Adrenal gland (tissue), 19 donors: ENCODE measurements at regions of chr3 and their contacts with region 1.

Region 1: GRCh38 chr3:69161587-69162307 is 39.4 kb upstream of the LMOD3 start:
- DNase-seq: peak in 6 of 7 donors; percentile 22 to 67 (median 32)
- H3K4me3 ChIP-seq: no peak overlapping the region
- H3K27ac ChIP-seq: no peak overlapping the region
- H3K4me1 ChIP-seq: no peaks in the 10 kb centered on the region
- H3K27me3 ChIP-seq: no peaks in the 10 kb centered on the region
- CTCF ChIP-seq: peak; percentile 87 to 97 (median 94)
- POLR2A ChIP-seq: no peak

Region 2: GRCh38 chr3:69266585-69266984 is 104.8 kb after region 1 on chr3:
- intact Hi-C with region 1: no loop called
- DNase-seq: no peak
- H3K4me3 ChIP-seq: no peak overlapping the region
- H3K27ac ChIP-seq: no peak overlapping the region
- H3K4me1 ChIP-seq: no peaks in the 10 kb centered on the region
- H3K27me3 ChIP-seq: no peaks in the 10 kb centered on the region
- CTCF ChIP-seq: no peak
- POLR2A ChIP-seq: no peak

Region 3: DNA sequence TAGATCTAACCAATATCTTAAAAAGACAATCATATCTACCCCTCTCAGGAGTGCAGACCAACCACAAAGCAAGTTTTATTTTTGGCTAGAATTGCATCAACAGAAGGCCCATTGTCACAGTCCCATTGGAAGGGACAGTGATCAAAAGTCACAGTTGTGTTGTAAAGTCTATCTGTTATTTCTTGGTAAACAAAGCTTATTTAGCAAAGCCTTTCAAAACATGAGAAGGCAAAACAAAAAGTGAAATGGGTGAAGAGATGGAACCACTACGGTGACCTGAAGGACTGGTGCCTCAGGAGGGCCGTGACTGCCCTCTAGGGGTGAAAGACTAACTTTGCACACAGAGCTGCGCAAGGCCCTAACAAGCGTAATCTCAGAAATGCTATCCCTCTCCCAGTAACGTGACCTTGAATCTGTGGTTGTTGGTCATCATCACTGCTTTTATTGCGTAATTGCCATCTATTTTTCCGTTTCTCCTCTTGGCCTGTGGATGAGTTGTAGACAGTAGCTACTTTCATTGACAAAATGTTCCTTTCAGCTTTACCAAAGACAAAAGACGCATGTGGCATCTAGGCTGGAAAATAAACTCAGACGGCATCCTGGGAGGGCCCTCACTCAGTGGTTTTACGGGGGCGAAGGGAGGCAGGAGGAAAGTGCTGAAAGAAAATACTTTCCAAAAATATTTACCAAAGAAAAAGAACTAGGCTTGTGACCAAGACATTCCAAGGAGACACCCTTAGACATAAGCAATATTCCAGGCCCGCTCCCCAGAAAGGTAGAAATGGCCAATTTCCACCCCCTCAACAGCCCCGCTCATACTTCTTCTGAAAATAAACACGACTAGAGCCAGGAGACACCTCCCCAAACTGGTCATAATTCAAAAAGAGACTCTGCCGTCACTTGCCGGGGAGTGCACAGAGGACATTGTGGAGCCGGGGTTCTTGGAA is 144.8 kb after region 1 on chr3:
- intact Hi-C with region 1: loop called (anchors 5 kb)
- DNase-seq: peak; percentile 79 to 89 (median 85)
- H3K4me3 ChIP-seq: no peak overlapping the region
- H3K27ac ChIP-seq: peak overlapping the region in 3 of 5 donors; percentile 40 to 60 (median 50)
- H3K4me1 ChIP-seq: peaks cover 0 to 11% of the 10 kb centered on the region in 2 donors
- H3K27me3 ChIP-seq: no peaks in the 10 kb centered on the region
- CTCF ChIP-seq: peak; percentile 83 to 95 (median 91)
- POLR2A ChIP-seq: no peak

Region 4: GRCh38 chr3:69410250-69410649 is 248.5 kb after region 1 on chr3:
- intact Hi-C with region 1: loop called (anchors 5 to 10 kb)
- DNase-seq: peak; percentile 68 to 91 (median 75)
- H3K4me3 ChIP-seq: no peak overlapping the region
- H3K27ac ChIP-seq: peak overlapping the region in 2 of 5 donors; percentile 17 to 70
- H3K4me1 ChIP-seq: no peaks in the 10 kb centered on the region
- H3K27me3 ChIP-seq: no peaks in the 10 kb centered on the region
- CTCF ChIP-seq: peak; percentile 67 to 89 (median 77)
- POLR2A ChIP-seq: no peak

Region 5: GRCh38 chr3:69671082-69671952 is 509.6 kb after region 1 on chr3:
- intact Hi-C with region 1: loop called (anchors 5 to 10 kb)
- DNase-seq: peak in 5 of 7 donors; percentile 20 to 62 (median 57)
- H3K4me3 ChIP-seq: no peak overlapping the region
- H3K27ac ChIP-seq: no peak overlapping the region
- H3K4me1 ChIP-seq: no peaks in the 10 kb centered on the region
- H3K27me3 ChIP-seq: no peaks in the 10 kb centered on the region
- CTCF ChIP-seq: peak; percentile 60 to 85 (median 74)
- POLR2A ChIP-seq: no peak